B cell (primary cell): ENCODE measurements at regions of chr19 and their contacts with region 1.

Region 1: DNA sequence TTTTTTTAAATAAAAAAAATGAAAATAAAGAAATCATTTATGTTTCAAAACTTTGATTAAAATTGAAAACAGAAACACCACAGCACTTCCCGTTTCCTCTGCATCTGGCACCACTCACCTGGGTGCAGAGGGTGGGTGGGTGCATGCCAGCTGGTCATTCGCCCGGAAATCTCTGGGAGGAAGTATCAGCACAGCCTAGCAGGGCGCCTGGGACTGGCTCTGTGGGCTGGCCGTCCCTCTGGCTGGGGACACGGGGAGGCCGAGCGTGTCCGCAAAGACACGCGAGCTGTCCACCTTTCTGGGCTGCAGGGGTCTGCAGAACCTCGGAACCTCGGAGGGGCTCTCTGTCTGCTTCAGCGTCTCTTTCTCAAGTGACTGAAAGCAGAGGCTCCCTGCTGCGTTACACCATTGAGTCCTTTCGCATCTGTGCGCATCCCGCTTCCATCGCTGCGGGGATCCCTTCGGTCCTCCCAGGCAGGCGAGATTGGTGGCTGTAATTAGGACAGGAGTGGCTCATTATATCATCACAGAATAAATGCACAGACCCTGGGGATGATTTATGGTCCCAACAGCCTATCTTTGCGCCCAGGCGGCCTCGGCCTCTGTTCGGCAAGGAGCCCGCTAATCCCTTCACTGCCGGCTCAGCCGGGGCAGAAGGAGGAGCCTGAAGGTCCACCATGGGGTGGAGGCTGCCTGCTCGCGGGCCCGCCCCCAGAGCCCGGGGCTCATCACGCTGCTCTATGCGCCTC is 17.2 kb downstream of the CRTC1 start:
- DNase-seq: peak; percentile 84
- ATAC-seq: peak; percentile 87
- H3K4me3 ChIP-seq: peak overlapping the region; percentile 44 to 76 (median 67)
- H3K4me3 Mint-ChIP-seq: peak overlapping the region; percentile 95
- H3K27ac ChIP-seq: peak overlapping the region; percentile 81 to 84
- H3K27ac Mint-ChIP-seq: peak overlapping the region; percentile 98
- H3K4me1 ChIP-seq: peaks cover 33 to 62% of the 10 kb centered on the region in 2 donors
- H3K4me1 Mint-ChIP-seq: peaks cover 44% of the 10 kb centered on the region
- H3K27me3 ChIP-seq: no peaks in the 10 kb centered on the region
- H3K27me3 Mint-ChIP-seq: no peaks in the 10 kb centered on the region
- CTCF ChIP-seq: no peak

Region 2: DNA sequence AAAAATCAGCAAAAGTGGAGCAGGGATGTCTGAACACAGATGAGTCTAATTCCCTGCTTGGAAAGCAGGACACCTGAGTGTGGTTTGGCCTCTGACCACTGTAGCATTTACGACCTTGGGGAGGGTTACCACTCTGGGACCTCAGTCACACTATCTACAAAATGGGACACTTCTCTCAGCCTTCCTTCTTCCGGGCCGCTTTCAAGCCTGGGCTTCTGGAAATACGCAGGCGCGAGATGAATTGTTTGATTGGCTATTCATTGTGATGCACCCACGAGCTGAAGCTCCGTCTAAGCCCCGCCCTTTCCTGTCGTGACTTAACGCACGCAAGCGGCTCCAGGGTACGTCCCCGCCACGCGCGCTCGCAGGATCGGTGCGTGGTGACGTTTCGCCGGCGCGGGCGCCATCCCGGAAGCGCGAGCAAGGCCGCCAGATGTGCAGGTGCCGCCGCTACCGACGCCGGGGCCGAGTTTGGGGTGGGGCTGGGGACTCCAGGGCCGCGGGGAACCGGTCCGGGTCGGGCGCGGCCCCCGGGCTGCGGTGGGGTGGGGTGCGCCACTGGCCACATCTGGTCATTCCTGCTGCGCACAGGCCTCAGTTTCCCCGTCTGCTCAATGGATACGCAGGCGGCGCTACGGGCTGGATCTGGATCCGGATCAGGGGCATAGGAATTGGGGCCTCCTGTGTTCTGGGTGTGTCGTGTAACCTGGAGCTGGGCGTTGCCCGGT is 143.0 kb before region 1 on chr19 and contains the start of gene KXD1:
- CTCF ChIA-PET with region 1: no interaction called
- POLR2A ChIA-PET with region 1: no interaction called
- intact Hi-C with region 1: no loop called
- DNase-seq: peak; percentile 99
- ATAC-seq: peak; percentile 99
- H3K4me3 ChIP-seq: peak within 1 kb of the TSS; percentile 73 to 98 (median 93)
- H3K4me3 Mint-ChIP-seq: peak within 1 kb of the TSS; percentile 90
- H3K27ac ChIP-seq: peak within 1 kb of the TSS; percentile 82 to 97
- H3K27ac Mint-ChIP-seq: peak within 1 kb of the TSS; percentile 90
- H3K4me1 ChIP-seq: peaks cover 15 to 25% of the 10 kb centered on the region in 2 donors
- H3K4me1 Mint-ChIP-seq: peaks cover 21% of the 10 kb centered on the region
- H3K27me3 ChIP-seq: no peaks in the 10 kb centered on the region
- H3K27me3 Mint-ChIP-seq: no peaks in the 10 kb centered on the region
- CTCF ChIP-seq: no peak
- total RNA-seq, gene KXD1: 88.5 and 90.0 TPM in 2 replicates

Region 3: DNA sequence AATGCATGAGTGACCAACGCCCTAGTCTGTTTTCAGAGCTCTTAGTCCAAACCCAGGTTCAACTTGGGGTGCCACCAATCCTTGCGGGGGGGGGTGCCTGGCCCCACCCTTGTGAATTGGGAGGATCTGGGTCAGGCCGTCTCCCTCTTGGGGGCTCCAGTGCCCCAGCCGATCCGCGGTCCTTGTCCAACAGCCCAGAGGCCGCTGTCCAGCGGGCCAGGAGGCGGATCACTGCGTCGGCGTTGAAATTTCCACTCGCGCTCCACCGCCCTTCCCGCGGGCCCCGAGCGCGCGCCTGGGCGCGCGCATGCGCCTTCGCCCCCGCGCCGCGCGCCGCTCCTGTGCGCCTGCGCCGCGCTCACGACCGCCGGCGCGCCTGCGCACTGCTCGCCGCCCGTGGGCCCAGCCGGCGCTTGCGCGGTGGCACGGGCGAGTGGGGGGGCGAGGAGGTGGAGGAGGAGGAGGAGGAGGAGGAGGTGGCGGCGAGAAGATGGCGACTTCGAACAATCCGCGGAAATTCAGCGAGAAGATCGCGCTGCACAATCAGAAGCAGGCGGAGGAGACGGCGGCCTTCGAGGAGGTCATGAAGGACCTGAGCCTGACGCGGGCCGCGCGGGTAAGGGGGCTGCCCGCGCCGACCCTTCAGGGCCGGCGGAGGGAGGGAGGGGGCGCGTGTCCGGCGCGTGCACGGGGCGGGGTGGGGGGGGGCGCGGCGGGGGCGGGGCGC is 17.3 kb before region 1 on chr19 and contains the start of gene CRTC1:
- CTCF ChIA-PET with region 1: no interaction called
- POLR2A ChIA-PET with region 1: interaction called, 7 read pairs
- intact Hi-C with region 1: loop called (anchors 1 kb)
- DNase-seq: peak; percentile 97
- ATAC-seq: peak; percentile 87
- H3K4me3 ChIP-seq: peak within 1 kb of the TSS; percentile 49 to 81 (median 73)
- H3K4me3 Mint-ChIP-seq: peak within 1 kb of the TSS; percentile 90
- H3K27ac ChIP-seq: peak within 1 kb of the TSS; percentile 46 to 67
- H3K27ac Mint-ChIP-seq: peak within 1 kb of the TSS; percentile 93
- H3K4me1 ChIP-seq: peaks cover 12 to 20% of the 10 kb centered on the region in 2 donors
- H3K4me1 Mint-ChIP-seq: peaks cover 30% of the 10 kb centered on the region
- H3K27me3 ChIP-seq: no peaks in the 10 kb centered on the region
- H3K27me3 Mint-ChIP-seq: no peaks in the 10 kb centered on the region
- CTCF ChIP-seq: no peak
- total RNA-seq, gene CRTC1: 30.1 and 31.9 TPM in 2 replicates

Region 4: DNA sequence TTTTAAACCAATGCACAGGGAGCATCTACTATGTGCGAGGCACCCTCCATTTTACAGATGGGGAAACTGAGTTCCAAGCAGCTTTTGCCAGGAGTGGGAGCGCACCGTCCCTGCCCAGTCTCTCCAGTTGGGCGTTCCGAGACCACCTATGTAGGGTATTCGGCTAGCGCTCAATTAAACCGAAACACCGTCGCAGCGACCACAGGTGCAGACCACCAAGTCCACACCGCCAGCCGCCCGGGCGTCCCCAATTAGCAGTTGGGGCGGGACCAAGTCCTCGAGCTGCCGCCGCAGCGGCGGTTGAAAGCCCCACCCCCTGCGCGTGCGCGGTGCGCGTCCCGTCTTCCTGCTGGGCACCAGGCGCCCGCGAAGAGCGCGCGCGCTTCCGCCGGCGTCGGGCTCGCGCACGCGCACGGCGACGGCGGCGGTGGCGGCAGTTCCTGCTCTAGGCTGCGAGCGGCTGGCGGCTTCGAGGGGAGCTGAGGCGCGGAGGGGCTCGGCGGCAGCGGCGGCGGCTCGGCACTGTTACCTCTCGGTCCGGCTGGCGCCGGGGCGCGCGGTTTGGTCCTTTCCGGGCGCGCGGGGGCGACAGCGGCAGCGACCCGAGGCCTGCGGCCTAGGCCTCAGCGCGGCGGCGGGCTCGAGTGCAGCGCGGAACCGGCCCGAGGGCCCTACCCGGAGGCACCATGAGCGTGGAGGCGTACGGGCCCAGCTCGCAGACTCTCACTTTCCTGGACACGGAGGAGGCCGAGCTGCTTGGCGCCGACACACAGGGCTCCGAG is 131.0 kb after region 1 on chr19 and contains the start of gene UPF1:
- CTCF ChIA-PET with region 1: no interaction called
- POLR2A ChIA-PET with region 1: no interaction called
- intact Hi-C with region 1: loop called (anchors 5 kb)
- DNase-seq: peak; percentile 97
- ATAC-seq: peak; percentile 81
- H3K4me3 ChIP-seq: peak within 1 kb of the TSS; percentile 63 to 82 (median 73)
- H3K4me3 Mint-ChIP-seq: peak within 1 kb of the TSS; percentile 91
- H3K27ac ChIP-seq: peak within 1 kb of the TSS; percentile 60 to 90
- H3K27ac Mint-ChIP-seq: peak within 1 kb of the TSS; percentile 92
- H3K4me1 ChIP-seq: peaks cover 34 to 39% of the 10 kb centered on the region in 2 donors
- H3K4me1 Mint-ChIP-seq: peaks cover 36% of the 10 kb centered on the region
- H3K27me3 ChIP-seq: no peaks in the 10 kb centered on the region
- H3K27me3 Mint-ChIP-seq: peaks cover 8% of the 10 kb centered on the region
- CTCF ChIP-seq: no peak
- total RNA-seq, gene UPF1: 95.1 and 98.6 TPM in 2 replicates